Caco-2 (cell line): ENCODE measurements at regions of chr11 and their contacts with region 1.

Region 1: GRCh38 chr11:3841426-3842350 is 929 bp upstream of the RHOG start:
- DNase-seq: peak; percentile 88 to 94
- H3K4me3 ChIP-seq: peak overlapping the region; percentile 68
- H3K4me3 Mint-ChIP-seq: peak overlapping the region; percentile 96
- H3K27ac Mint-ChIP-seq: peak overlapping the region; percentile 84
- H3K4me1 ChIP-seq: peaks cover 9% of the 10 kb centered on the region; the same call in 1 of the 2 replicates
- H3K4me1 Mint-ChIP-seq: peaks cover 10% of the 10 kb centered on the region
- H3K27me3 ChIP-seq: no peaks in the 10 kb centered on the region
- H3K27me3 Mint-ChIP-seq: no peaks in the 10 kb centered on the region
- CTCF ChIP-seq: peak; percentile 77 to 95

Region 2: DNA sequence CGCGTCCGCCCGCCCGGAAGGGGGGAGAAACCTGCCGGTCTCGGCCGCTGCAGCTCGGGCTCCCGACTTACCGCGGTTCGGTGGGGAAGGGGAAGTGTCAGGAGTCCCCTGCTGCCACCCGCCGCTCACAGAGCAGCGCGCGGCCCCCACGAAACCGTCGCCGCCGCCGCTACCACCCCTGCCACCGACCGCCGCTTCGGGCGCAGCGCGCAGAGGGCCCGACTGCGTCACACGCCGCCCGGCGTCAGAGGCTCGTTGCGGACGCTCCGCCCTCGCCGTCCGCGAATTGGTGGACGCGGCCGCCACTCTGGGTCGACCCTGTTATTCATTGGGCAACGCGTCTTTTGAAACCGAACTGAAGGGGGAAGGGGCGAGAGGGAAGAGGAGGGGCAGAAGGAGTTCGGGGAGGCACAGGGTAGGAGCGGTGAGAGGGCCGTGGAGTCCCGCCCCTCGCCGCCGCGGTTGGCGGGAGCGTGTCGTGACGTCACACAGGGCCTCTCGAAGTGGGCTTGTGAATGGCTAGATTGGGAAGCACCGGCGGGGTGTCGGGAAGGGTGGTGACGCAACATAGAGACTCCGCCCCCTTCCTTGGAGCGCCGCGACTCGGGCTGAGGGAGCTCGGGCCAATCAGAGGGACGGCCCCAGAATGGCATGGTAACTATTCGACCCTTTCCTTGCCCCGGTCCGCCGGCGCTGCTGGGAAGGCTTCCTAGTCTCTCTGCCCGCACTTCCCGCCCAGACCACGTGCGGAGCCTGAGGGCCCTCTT is 44.2 kb before region 1 on chr11 and contains the start of gene NUP98:
- CTCF ChIA-PET with region 1: interaction called, 3 read pairs
- POLR2A ChIA-PET with region 1: interaction called, 9 read pairs
- intact Hi-C with region 1: loop called (anchors 1 kb)
- DNase-seq: peak; percentile 100
- H3K4me3 ChIP-seq: peak within 1 kb of the TSS; percentile 59
- H3K4me3 Mint-ChIP-seq: peak within 1 kb of the TSS; percentile 90
- H3K27ac Mint-ChIP-seq: peak within 1 kb of the TSS; percentile 96
- H3K4me1 ChIP-seq: peaks cover 25% of the 10 kb centered on the region
- H3K4me1 Mint-ChIP-seq: peaks cover 12% of the 10 kb centered on the region
- H3K27me3 ChIP-seq: no peaks in the 10 kb centered on the region
- H3K27me3 Mint-ChIP-seq: no peaks in the 10 kb centered on the region
- CTCF ChIP-seq: no peak
- total RNA-seq, gene NUP98: 146 and 150 TPM in 2 replicates

Region 3: DNA sequence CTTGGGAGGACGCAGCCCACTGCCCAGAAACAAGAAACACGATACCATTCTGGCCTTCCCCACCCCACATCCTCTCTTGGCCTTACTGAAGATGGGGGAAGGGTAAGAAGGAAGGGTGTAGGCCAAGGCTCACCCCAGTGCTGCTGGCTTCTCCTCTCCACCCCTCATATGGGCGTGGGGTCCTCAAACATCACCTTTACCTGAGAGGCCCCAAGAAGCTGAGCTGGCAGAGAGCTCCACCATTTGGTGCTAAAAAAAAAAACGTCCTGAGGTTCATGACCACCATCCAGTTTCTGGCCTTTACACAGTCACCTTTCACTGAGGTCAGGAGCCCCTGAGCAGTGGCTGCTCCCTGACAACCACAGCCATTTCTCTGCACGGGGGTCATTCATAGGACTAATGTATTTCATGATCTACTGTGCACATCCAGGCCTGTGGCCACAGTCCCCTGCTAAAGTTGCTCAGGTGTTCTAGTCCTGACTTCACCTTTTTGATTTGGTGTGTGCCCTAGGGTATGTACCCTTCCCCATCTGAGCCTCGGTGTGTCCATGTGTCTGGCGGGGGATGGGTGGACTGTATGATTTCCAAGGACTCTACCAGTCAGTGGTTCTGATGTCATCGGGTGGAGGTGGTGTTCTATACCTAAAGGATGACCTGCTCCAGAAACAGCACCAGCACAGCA is 16.1 kb before region 1 on chr11:
- CTCF ChIA-PET with region 1: interaction called, 13 read pairs
- POLR2A ChIA-PET with region 1: interaction called, 4 read pairs
- intact Hi-C with region 1: no loop called
- DNase-seq: no peak
- H3K4me3 ChIP-seq: no peak overlapping the region
- H3K4me3 Mint-ChIP-seq: no peak overlapping the region
- H3K27ac Mint-ChIP-seq: no peak overlapping the region
- H3K4me1 ChIP-seq: no peaks in the 10 kb centered on the region
- H3K4me1 Mint-ChIP-seq: no peaks in the 10 kb centered on the region
- H3K27me3 ChIP-seq: no peaks in the 10 kb centered on the region
- H3K27me3 Mint-ChIP-seq: no peaks in the 10 kb centered on the region
- CTCF ChIP-seq: no peak

Region 4: DNA sequence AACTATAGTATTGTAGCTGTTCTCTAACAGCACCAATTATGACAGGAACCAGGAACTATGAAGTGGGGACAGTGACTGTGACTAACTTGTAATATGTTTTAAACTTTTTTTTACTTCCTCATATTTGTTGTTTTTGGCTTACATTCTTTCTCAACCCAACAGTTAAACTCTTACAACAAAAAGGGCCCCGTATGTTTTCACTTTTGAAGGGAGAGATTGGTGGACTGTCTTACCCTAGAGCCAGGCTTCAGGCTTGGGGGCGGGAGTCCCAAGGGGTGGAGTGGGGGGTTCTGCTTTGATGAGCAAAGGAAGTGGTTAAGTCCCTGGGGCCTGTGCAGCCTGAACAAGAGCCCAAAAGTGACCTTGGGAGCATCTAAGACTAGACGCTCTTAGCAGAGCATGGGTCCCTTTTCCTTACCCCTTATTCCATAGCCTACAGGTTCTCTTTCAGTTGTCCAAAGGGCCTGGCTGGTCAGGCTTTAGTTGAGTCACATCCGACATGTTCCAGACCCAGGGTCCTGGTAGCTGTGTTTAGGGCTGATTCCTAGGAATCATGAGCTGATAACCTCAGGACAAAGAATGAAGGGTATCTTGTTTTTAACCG is 52.5 kb after region 1 on chr11:
- CTCF ChIA-PET with region 1: no interaction called
- POLR2A ChIA-PET with region 1: no interaction called
- intact Hi-C with region 1: no loop called
- DNase-seq: no peak
- H3K4me3 ChIP-seq: no peak overlapping the region
- H3K4me3 Mint-ChIP-seq: no peak overlapping the region
- H3K27ac Mint-ChIP-seq: no peak overlapping the region
- H3K4me1 ChIP-seq: no peaks in the 10 kb centered on the region; the same call in 1 of the 2 replicates
- H3K4me1 Mint-ChIP-seq: peaks cover 11% of the 10 kb centered on the region
- H3K27me3 ChIP-seq: no peaks in the 10 kb centered on the region
- H3K27me3 Mint-ChIP-seq: no peaks in the 10 kb centered on the region
- CTCF ChIP-seq: no peak

Region 5: GRCh38 chr11:4060182-4060923 is 218.7 kb after region 1 on chr11:
- CTCF ChIA-PET with region 1: interaction called, 10 read pairs
- POLR2A ChIA-PET with region 1: no interaction called
- intact Hi-C with region 1: no loop called
- DNase-seq: peak; percentile 60 to 76
- H3K4me3 ChIP-seq: no peak overlapping the region
- H3K4me3 Mint-ChIP-seq: no peak overlapping the region
- H3K27ac Mint-ChIP-seq: peak overlapping the region; percentile 6
- H3K4me1 ChIP-seq: peaks cover 40% of the 10 kb centered on the region
- H3K4me1 Mint-ChIP-seq: peaks cover 42% of the 10 kb centered on the region
- H3K27me3 ChIP-seq: no peaks in the 10 kb centered on the region
- H3K27me3 Mint-ChIP-seq: no peaks in the 10 kb centered on the region
- CTCF ChIP-seq: no peak